ENCODE measurements at regions of chr1 and their contacts with region 1.

Region 1: DNA sequence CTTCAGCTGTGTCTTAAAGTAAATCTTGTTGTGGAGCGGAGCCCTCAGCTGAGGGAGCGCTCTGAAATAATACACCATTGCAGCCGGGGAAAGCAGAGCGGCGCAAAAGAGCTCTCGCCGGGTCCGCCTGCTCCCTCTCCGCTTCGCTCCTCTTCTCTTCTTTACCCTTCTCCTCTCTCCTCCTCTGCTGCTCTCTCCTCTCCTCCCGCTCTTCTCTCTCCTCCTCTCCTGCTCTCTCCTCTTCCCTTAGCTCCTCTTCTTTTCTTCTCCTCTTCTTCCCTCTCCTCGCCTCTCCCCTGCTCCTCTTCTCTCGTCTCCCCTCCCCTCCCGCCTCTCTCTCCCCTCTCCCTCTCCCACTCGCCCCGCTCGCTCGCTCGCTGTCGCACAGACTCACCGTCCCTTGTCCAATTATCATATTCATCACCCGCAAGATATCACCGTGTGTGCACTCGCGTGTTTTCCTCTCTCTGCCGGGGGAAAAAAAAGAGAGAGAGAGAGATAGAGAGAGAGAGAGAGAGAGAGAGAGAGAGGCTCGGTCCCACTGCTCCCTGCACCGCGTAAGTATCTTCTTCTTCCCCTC is at the start of gene PROX1:
- DNase-seq: peak in 1 of 6 donors; percentile 84
- ATAC-seq: peak; percentile 5 to 82 (median 44)
- H3K4me3 ChIP-seq: peak within 1 kb of the TSS; percentile 46 to 67 (median 54)
- H3K27ac ChIP-seq: peak within 1 kb of the TSS; percentile 83 to 94 (median 91)
- H3K4me1 ChIP-seq: peaks cover 0 to 9% (median 5%) of the 10 kb centered on the region in 3 donors
- H3K27me3 ChIP-seq: no peaks in the 10 kb centered on the region
- CTCF ChIP-seq: no peak
- total RNA-seq, gene PROX1: 32.8 to 66.4 (median 38.4) TPM

Region 2: DNA sequence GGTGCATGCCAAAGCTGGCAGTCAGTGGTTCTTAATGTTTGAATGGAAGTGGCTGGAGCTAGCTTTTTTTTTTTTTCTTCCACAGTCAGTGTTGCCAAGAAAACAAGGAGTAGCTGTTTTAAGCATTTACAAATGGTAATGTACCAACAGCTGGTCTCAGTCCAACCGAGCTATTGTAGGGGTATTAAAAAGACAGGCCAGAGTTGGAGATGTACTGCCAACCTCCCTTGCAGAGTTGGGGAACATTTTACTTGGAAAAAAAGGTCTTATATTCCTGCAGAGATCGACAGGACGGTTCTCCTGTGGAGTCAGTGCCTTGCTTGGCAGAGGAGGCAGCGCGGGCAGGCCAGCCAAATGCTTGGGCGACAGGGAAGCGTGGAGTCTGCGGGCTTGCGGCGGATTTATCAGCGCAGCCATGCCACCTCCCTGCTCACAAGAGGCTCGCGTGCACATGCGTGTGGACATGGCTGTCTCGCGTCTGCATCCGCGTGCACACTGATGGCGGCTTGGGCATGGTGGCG is 598.9 kb before region 1 on chr1:
- intact Hi-C with region 1: no loop called
- DNase-seq: no peak
- ATAC-seq: no peak
- H3K4me3 ChIP-seq: no peak overlapping the region
- H3K27ac ChIP-seq: no peak overlapping the region
- H3K4me1 ChIP-seq: no peaks in the 10 kb centered on the region
- H3K27me3 ChIP-seq: no peaks in the 10 kb centered on the region
- CTCF ChIP-seq: no peak

Region 3: GRCh38 chr1:213585959-213586586 is 401.9 kb before region 1 on chr1:
- intact Hi-C with region 1: loop called in 1 of 3 experiments (anchors 10 kb)
- DNase-seq: peak in 3 of 6 donors; percentile 35 to 59 (median 38)
- ATAC-seq: peak; percentile 44 to 60 (median 54)
- H3K4me3 ChIP-seq: no peak overlapping the region
- H3K27ac ChIP-seq: peak overlapping the region; percentile 65 to 81 (median 72)
- H3K4me1 ChIP-seq: peaks cover 18 to 28% (median 20%) of the 10 kb centered on the region in 3 donors
- H3K27me3 ChIP-seq: no peaks in the 10 kb centered on the region
- CTCF ChIP-seq: no peak

Measured in pancreas (tissue), 10 donors.